Sigmoid colon (tissue), 7 donors: ENCODE measurements at regions of chr9 and their contacts with region 1.

Region 1: GRCh38 chr9:18255158-18255629 is 218.8 kb upstream of the ADAMTSL1 start:
- DNase-seq: peak; percentile 91
- H3K4me3 ChIP-seq: no peak overlapping the region
- H3K27ac ChIP-seq: no peak overlapping the region
- H3K4me1 ChIP-seq: peaks cover 0 to 11% (median 3%) of the 10 kb centered on the region in 4 donors
- H3K27me3 ChIP-seq: no peaks in the 10 kb centered on the region
- CTCF ChIP-seq: peak; percentile 89 to 92 (median 90)
- EP300 ChIP-seq: no peak
- POLR2A ChIP-seq: no peak

Region 2: DNA sequence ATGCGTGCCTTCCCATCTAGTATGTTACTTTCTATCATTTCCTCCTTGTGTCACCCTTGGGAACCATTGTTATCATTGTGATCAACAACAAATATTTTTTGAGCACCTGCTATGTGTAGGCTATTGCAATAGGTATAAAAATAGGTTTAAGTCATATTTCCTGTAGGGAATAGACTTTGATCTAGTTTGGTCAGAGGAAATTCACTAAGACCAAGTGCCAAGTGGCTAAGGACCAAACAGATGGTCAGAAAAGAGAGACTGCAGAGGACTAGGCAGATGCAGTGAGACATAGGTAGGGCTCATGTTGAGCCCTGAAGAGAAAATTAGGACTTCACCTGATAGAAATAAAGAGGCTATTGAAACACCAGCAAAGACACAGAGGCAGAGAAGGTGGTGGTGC is 211.2 kb before region 1 on chr9:
- intact Hi-C with region 1: no loop called
- DNase-seq: no peak
- H3K4me3 ChIP-seq: no peak overlapping the region
- H3K27ac ChIP-seq: no peak overlapping the region
- H3K4me1 ChIP-seq: no peaks in the 10 kb centered on the region
- H3K27me3 ChIP-seq: no peaks in the 10 kb centered on the region
- CTCF ChIP-seq: no peak
- EP300 ChIP-seq: no peak
- POLR2A ChIP-seq: no peak

Region 3: DNA sequence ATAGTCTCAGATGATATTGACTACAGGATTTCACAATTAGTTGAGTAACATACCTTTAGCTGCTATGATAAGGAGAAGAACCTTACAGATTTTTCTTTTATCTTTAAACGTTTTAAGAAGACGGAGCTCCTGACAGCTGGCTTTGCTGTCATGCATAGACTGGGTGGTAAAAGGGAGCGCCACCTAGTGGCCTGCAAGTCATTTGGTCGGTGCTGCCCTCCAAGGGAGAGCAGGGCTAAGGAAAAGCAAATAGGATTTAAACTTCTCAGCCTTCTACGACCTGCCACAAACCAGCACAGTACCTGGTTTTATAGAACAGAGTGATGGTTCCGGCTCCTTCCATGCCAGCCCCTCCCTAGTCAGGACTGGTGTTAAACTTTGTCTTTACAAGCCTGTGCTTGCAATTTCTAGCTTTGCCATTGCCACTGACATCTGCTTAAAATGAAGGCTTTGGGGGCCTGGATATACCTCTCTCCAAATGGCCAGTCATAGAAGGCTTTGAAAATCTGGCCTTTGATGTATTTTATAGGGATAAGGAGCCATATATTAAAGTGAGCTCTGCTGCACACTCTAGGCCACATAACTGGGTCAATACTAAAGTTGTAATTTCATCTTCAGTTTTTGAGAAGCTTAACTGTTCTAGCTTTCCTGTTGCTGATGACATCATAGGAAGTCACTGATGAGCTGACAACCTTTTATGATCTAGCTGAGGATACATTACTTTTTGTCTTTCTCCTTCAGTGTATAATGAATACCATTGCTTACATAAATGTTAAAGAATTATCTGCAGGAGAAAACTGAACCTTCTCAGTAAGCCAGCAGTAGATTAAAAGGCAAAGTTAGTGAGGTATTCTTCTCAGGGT is 187.7 kb after region 1 on chr9:
- intact Hi-C with region 1: loop called (anchors 1 kb)
- DNase-seq: peak; percentile 86
- H3K4me3 ChIP-seq: no peak overlapping the region
- H3K27ac ChIP-seq: peak overlapping the region in 3 of 4 donors; percentile 11 to 39 (median 35)
- H3K4me1 ChIP-seq: peaks cover 0 to 41% (median 34%) of the 10 kb centered on the region in 4 donors
- H3K27me3 ChIP-seq: no peaks in the 10 kb centered on the region
- CTCF ChIP-seq: peak; percentile 33 to 91 (median 78)
- EP300 ChIP-seq: no peak
- POLR2A ChIP-seq: no peak

Region 4: DNA sequence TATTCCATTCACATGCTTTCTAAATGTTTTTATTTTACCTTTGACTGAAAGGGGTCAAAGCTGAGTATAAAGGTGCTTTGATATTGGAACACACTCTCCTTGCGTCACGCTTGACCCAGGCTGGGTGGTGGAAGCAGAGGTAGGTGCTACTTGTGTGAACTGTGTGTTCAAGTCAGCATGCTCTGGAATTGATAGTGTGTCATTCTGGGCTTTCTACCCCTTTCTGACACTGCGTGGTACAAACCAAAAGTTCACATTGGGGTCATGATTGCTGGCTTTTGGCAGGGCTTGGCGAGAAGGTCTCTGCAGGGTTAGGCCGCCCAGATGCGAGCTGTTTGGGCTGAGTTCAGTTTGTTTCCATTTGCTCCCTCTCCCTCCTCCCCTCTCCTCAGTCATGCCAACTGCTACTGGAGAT is 350.6 kb after region 1 on chr9:
- intact Hi-C with region 1: loop called (anchors 5 kb)
- DNase-seq: peak; percentile 73
- H3K4me3 ChIP-seq: no peak overlapping the region
- H3K27ac ChIP-seq: peak overlapping the region; percentile 37 to 50 (median 46)
- H3K4me1 ChIP-seq: peaks cover 0 to 33% (median 26%) of the 10 kb centered on the region in 4 donors
- H3K27me3 ChIP-seq: no peaks in the 10 kb centered on the region
- CTCF ChIP-seq: no peak
- EP300 ChIP-seq: no peak
- POLR2A ChIP-seq: no peak

Region 5: DNA sequence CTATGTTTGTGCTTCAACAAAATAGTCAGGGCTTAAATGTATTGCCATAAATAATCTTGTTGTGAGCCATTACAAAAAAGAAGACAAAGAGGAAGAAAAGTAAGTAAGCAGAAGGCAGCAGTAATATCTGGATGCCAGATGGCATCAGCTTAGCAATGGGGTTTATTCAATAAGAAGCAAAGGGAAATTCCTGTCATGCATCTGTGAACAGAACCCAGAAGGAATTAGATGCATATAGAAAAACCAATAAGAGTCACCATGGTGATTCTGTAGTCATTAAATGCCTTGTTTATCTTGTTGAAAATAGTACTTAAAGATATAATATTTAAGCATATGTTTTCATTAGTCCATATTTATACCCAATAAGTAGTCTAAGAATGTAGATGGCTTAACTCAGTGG is 434.7 kb after region 1 on chr9:
- intact Hi-C with region 1: loop called (anchors 10 kb)
- DNase-seq: no peak
- H3K4me3 ChIP-seq: no peak overlapping the region
- H3K27ac ChIP-seq: no peak overlapping the region
- H3K4me1 ChIP-seq: peaks cover 0 to 12% (median 4%) of the 10 kb centered on the region in 4 donors
- H3K27me3 ChIP-seq: no peaks in the 10 kb centered on the region
- CTCF ChIP-seq: no peak
- EP300 ChIP-seq: no peak
- POLR2A ChIP-seq: no peak

Region 6: DNA sequence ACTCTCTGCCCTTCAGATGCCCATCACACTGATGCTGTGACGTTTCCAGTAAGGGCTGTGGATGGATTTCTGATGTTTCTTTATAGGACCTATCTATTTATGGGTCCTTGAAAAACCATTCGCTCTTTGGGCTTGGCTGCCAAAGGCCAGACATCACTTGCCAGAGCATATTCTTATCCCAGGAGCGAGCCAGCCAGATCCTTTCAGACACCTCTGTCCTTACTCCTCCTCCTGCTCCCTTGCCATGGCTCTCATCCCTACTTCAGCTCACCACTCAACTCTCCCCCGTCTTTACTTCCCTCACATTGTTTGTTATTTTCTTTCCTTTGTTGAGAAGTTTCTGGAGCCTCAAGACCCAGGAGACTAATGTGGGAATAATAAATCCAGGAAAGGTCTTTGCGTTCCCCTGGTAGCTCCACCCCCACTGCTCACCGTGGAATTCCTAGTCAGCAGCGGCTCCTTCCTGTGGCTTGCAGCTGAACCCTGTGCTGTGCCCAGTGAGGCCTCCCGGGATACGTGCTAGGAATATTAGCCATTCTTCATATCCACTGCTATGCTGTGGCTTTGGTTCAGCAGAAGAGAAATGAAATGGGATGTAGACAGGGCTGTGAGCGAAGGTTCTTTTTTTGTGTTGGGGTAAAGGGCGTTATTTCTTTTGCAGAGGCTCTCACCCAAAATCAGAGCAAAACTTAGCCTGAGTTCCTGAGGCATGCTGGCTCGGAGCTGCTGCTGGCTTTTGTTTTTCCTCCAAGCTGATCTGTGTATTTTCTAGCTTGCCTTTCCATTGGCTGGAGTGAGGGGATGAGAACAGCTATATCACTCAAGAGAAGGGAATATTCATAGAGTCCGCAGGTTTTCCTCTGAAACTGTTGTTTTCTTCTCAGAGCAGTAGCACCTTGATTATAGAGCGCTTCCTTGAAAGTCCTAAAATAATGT is 606.7 kb after region 1 on chr9:
- intact Hi-C with region 1: loop called (anchors 10 kb)
- DNase-seq: peak; percentile 79
- H3K4me3 ChIP-seq: no peak overlapping the region
- H3K27ac ChIP-seq: peak overlapping the region; percentile 39 to 65 (median 43)
- H3K4me1 ChIP-seq: peaks cover 0 to 18% (median 18%) of the 10 kb centered on the region in 4 donors
- H3K27me3 ChIP-seq: no peaks in the 10 kb centered on the region
- CTCF ChIP-seq: no peak
- EP300 ChIP-seq: no peak
- POLR2A ChIP-seq: no peak

Region 7: DNA sequence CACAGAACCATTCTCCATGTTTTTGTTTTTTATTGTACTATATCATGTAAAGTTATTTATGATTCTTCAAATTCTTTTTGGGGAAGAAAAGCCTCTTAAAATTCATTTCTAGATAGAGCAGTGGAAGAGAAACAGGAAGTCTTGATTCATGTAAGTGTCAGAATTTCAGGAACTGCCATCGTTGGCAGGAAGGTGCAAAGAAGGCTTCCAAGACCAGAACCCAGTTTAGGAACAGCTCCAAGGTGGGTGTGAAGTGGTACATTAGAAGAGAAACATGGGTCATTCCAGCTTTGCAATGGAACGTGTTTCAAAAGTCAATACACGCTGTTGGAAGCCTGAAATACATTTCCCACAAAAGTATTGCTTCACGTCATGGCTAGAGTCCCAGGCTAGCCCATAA is 763.0 kb after region 1 on chr9:
- intact Hi-C with region 1: loop called (anchors 5 kb)
- DNase-seq: no peak
- H3K4me3 ChIP-seq: no peak overlapping the region
- H3K27ac ChIP-seq: no peak overlapping the region
- H3K4me1 ChIP-seq: no peaks in the 10 kb centered on the region
- H3K27me3 ChIP-seq: no peaks in the 10 kb centered on the region
- CTCF ChIP-seq: no peak
- EP300 ChIP-seq: no peak
- POLR2A ChIP-seq: no peak

Region 8: GRCh38 chr9:19028835-19029451 is 773.7 kb after region 1 on chr9:
- intact Hi-C with region 1: loop called (anchors 1 kb)
- DNase-seq: no peak
- H3K4me3 ChIP-seq: no peak overlapping the region
- H3K27ac ChIP-seq: no peak overlapping the region
- H3K4me1 ChIP-seq: no peaks in the 10 kb centered on the region
- H3K27me3 ChIP-seq: peaks cover 0 to 4% (median 0%) of the 10 kb centered on the region in 3 donors
- CTCF ChIP-seq: peak; percentile 34 to 80 (median 62)
- EP300 ChIP-seq: no peak
- POLR2A ChIP-seq: no peak